ENCODE measurements at regions of chr1 and their contacts with region 1.

Region 1: GRCh38 chr1:198157241-198157846 is 546 bp downstream of the NEK7 start:
- DNase-seq: peak; percentile 79 to 87
- H3K4me3 ChIP-seq: peak overlapping the region; percentile 91
- H3K27ac ChIP-seq: peak overlapping the region; percentile 81
- H3K4me1 ChIP-seq: peaks cover 34% of the 10 kb centered on the region
- H3K27me3 ChIP-seq: no peaks in the 10 kb centered on the region
- CTCF ChIP-seq: no peak

Region 2: GRCh38 chr1:197620714-197621163 is 536.6 kb before region 1 on chr1:
- CTCF ChIA-PET with region 1: interaction called, 3 read pairs
- POLR2A ChIA-PET with region 1: no interaction called
- intact Hi-C with region 1: loop called (anchors 5 kb)
- DNase-seq: peak in 1 of 2 experiments; percentile 36
- H3K4me3 ChIP-seq: no peak overlapping the region
- H3K27ac ChIP-seq: no peak overlapping the region
- H3K4me1 ChIP-seq: no peaks in the 10 kb centered on the region
- H3K27me3 ChIP-seq: no peaks in the 10 kb centered on the region
- CTCF ChIP-seq: no peak

Region 3: GRCh38 chr1:197924516-197925123 is 232.7 kb before region 1 on chr1:
- CTCF ChIA-PET with region 1: no interaction called
- POLR2A ChIA-PET with region 1: no interaction called
- intact Hi-C with region 1: loop called (anchors 2 kb)
- DNase-seq: peak in 1 of 2 experiments; percentile 18
- H3K4me3 ChIP-seq: no peak overlapping the region
- H3K27ac ChIP-seq: no peak overlapping the region
- H3K4me1 ChIP-seq: no peaks in the 10 kb centered on the region
- H3K27me3 ChIP-seq: no peaks in the 10 kb centered on the region
- CTCF ChIP-seq: peak; percentile 84

Region 4: GRCh38 chr1:197984289-197984688 is 173.1 kb before region 1 on chr1:
- CTCF ChIA-PET with region 1: no interaction called
- POLR2A ChIA-PET with region 1: no interaction called
- intact Hi-C with region 1: no loop called
- DNase-seq: no peak
- H3K4me3 ChIP-seq: no peak overlapping the region
- H3K27ac ChIP-seq: no peak overlapping the region
- H3K4me1 ChIP-seq: no peaks in the 10 kb centered on the region
- H3K27me3 ChIP-seq: no peaks in the 10 kb centered on the region
- CTCF ChIP-seq: no peak

Region 5: DNA sequence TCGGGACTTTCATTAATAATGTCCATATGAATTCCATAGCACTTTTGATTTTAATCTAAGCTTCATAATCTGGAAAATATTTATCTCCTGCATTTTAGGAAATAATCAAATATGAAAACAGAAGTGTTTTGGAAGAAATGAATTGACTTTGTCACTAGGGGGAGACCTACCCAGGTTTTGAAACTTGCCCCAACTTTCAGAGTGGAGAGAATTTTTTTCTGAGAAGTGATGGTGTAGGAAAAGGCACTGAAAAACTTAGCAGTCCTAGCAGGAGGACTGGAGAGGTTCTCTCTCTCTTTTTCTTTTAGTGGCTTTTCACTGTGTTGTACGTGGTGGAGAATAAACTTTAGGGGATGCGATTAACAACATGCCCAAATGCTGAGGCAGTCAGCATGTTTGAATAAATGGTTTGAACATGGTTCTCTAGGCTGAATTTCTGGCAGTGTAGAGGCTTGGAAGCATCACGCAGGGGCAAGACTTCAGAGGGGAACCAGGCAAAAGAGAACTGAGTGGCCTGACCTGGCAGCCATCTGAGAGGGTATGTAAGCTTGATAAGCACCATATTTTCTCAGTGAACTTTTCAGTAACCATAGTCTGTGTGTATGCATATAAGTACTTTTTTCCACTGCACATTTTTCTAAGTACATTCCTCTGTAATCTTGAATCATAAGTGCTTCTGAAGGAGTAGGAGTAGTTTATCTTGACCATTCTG is 68.8 kb before region 1 on chr1:
- CTCF ChIA-PET with region 1: interaction called, 3 read pairs
- POLR2A ChIA-PET with region 1: no interaction called
- intact Hi-C with region 1: loop called (anchors 1 kb)
- DNase-seq: peak in 1 of 2 experiments; percentile 16
- H3K4me3 ChIP-seq: no peak overlapping the region
- H3K27ac ChIP-seq: no peak overlapping the region
- H3K4me1 ChIP-seq: no peaks in the 10 kb centered on the region
- H3K27me3 ChIP-seq: no peaks in the 10 kb centered on the region
- CTCF ChIP-seq: peak; percentile 75

Region 6: DNA sequence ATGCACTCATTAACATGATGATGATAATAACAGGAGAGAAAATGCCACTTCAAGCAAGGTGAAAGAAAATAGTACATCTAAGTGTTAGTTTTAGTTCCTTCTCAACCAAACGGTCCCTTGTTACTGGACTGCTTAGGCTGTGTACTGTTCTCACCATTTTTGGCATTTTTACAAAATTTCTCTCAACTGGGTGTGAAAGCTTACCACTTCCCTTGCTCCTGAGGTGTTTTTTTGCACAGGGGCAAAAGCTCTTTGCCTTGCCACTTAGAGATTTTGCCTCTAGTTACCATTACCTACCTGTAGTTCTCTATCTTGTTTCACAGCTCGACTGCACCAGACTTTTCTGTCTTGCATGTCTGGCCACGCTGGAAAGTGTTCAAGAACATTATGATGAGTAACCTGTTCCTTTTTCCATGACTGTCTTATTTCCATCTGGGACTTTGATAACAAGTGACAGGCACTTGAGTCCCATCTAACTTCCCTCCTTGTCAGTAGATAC is 10.1 kb after region 1 on chr1:
- CTCF ChIA-PET with region 1: no interaction called
- POLR2A ChIA-PET with region 1: no interaction called
- intact Hi-C with region 1: no loop called
- DNase-seq: no peak
- H3K4me3 ChIP-seq: no peak overlapping the region
- H3K27ac ChIP-seq: no peak overlapping the region
- H3K4me1 ChIP-seq: no peaks in the 10 kb centered on the region
- H3K27me3 ChIP-seq: no peaks in the 10 kb centered on the region
- CTCF ChIP-seq: no peak

Region 7: GRCh38 chr1:198234520-198235251 is 77.3 kb after region 1 on chr1:
- CTCF ChIA-PET with region 1: no interaction called
- POLR2A ChIA-PET with region 1: interaction called, 3 read pairs
- intact Hi-C with region 1: loop called (anchors 5 kb)
- DNase-seq: no peak
- H3K4me3 ChIP-seq: no peak overlapping the region
- H3K27ac ChIP-seq: no peak overlapping the region
- H3K4me1 ChIP-seq: no peaks in the 10 kb centered on the region
- H3K27me3 ChIP-seq: no peaks in the 10 kb centered on the region
- CTCF ChIP-seq: no peak

Region 8: DNA sequence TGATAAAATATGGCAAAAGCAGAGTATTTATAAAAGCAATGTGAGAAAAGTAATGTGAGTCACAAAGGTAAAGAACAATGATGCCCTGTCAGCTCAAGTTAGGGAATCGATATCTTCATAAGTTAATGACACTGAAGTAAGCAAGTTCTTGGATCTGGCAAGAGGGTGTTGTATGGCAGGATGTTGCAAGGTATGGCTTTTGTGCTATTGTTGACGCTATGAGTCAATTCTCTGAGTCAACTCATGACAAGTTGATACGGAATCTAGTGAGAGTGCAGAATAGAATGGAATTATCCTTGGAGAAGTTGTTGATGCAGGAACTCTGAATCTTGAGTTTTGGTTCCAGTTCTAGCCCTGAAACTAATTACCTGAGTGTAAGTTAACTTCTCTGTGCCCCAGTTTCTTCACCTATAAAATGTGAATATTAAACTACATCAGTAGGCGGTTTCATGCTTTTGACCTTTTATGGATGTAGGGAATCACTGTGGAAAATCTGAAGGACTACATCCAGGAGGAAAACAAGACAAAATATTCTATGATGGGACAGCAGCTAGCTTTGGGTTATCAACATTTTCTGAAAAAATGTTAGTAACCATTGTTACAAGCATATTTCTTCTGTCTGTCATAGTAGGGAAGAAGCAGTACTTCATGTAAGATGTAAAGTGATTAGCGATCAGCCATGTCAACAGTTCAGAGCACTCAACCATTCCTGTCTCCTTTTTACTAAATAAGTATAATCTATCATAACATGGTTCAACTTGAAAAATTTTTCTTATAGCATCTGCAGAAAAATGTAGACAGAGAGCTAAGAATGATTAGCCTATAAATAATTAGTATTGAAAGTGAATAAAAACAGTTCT is 286.3 kb after region 1 on chr1:
- CTCF ChIA-PET with region 1: no interaction called
- POLR2A ChIA-PET with region 1: interaction called, 5 read pairs
- intact Hi-C with region 1: loop called (anchors 2 kb)
- DNase-seq: peak; percentile 54 to 95
- H3K4me3 ChIP-seq: no peak overlapping the region
- H3K27ac ChIP-seq: peak overlapping the region; percentile 89
- H3K4me1 ChIP-seq: peaks cover 20% of the 10 kb centered on the region
- H3K27me3 ChIP-seq: no peaks in the 10 kb centered on the region
- CTCF ChIP-seq: no peak

Measured in PC-9 (cell line).